OCI-LY7 (cell line): ENCODE measurements at regions of chr4 and their contacts with region 1.

Region 1: GRCh38 chr4:163554870-163555465 is 60.5 kb downstream of the TMA16 start:
- DNase-seq: peak; percentile 68
- H3K4me3 ChIP-seq: no peak overlapping the region
- H3K27ac ChIP-seq: no peak overlapping the region
- H3K4me1 ChIP-seq: peaks cover 40% of the 10 kb centered on the region
- CTCF ChIP-seq: peak; percentile 99

Region 2: DNA sequence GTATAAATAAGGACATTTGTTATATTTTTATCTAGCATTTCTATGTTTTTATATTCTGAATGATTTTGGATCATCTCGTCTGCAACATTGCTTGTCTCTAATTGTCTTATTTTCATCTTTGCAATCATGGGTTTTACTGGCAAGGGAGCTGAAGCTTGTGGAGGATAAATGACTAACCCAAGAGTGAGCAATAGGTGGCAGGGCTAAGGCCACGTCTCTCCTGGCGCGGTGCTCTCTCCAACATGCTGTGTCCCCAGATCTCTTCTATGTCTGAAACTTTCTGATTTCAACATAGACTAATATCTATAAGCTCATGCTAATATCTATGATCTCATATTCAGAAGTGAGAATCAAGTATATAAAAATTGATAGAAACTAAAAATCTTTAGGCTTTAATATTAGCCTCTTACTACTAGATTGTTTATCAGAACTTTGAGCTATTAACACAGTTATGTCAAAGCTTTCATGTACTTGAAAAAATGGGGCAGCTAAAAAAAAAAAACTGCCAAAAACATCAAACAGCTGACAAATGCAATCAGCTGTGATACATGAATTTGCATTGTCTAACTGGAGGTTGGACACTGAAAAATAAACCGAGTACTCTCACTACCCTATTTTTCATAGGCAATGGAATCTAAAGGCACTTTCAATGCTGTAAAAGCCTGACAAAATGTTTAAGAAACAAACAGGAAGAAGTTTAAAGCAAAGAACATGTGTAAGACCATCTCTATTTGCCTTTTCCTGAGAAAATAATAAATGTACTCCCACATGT is 108.7 kb after region 1 on chr4:
- CTCF ChIA-PET with region 1: interaction called, 13 read pairs
- POLR2A ChIA-PET with region 1: interaction called, 111 read pairs
- intact Hi-C with region 1: loop called (anchors 1 kb)
- DNase-seq: peak; percentile 93
- H3K4me3 ChIP-seq: peak overlapping the region; percentile 50
- H3K27ac ChIP-seq: peak overlapping the region; percentile 99
- H3K4me1 ChIP-seq: peaks cover 69% of the 10 kb centered on the region
- CTCF ChIP-seq: peak; percentile 52

Region 3: DNA sequence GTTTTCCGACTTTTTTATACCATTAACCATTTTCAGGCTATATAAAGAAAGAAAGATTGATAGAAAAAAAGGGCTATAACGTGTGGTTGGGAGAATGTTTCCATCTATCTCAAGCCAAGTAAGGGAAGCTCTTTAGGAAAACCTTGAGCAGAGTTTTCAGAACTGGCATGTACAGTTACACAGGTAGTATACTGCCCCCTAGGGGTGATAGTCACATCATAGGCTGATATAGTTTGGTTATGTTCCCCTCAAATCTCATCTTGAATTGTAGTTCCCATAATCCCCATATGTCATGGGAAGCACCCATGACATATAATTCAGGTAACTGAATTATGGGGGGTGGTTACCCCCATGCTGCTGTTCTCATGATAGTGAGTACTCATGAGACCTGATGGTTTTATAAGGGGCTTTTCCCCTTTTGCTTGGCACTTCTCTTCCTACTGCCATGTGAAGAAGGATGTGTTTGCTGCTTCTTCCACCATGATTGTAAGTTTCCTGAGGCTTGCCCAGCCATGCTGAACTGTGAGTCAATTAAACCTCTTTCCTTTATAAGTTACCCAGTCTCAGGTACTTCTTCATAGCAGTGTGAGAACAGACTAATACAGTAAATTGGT is 126.3 kb after region 1 on chr4:
- CTCF ChIA-PET with region 1: interaction called, 24 read pairs
- POLR2A ChIA-PET with region 1: interaction called, 109 read pairs
- intact Hi-C with region 1: loop called (anchors 1 kb)
- DNase-seq: peak; percentile 89
- H3K4me3 ChIP-seq: no peak overlapping the region
- H3K27ac ChIP-seq: no peak overlapping the region
- H3K4me1 ChIP-seq: peaks cover 4% of the 10 kb centered on the region
- CTCF ChIP-seq: peak; percentile 89

Region 4: DNA sequence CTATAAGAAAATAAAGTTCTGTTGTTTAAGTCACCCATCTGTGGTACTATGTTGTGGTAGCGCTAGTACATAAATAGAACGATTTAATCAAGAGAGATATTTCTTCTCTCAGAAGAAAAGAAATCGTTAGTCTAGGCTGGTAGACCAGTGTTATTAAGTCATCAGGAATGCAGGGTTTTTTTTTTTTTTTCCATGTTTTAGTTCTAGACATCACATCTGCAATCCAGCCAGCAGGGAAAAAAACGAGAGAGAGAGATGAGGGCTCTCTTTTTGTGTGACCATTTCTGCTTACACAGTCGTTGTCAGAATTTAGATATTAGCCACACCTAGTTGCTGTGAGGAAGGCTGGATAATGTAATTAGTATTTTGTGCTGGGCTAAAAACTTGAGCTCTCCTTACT is 356.9 kb after region 1 on chr4:
- CTCF ChIA-PET with region 1: no interaction called
- POLR2A ChIA-PET with region 1: no interaction called
- intact Hi-C with region 1: loop called (anchors 10 kb)
- DNase-seq: no peak
- H3K4me3 ChIP-seq: no peak overlapping the region
- H3K27ac ChIP-seq: no peak overlapping the region
- H3K4me1 ChIP-seq: no peaks in the 10 kb centered on the region
- CTCF ChIP-seq: no peak

Region 5: DNA sequence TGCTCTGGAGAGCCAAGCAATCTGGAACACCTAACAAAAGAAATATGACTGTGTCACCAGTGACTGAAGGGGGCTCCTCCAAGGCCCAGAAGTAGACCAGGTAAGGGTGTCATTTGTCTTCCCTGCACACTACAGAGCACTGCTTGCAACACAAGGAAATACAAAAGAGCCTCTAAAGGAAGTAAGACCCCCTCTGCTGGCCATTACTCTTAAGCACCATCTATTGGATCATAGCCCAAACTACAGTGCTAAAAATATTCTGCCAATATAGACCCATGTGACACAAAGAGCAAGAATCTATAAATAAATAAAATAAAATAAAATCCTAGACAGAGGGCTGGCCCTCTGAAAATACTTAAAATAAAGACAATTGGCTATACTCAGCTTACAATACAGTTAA is 468.2 kb after region 1 on chr4:
- CTCF ChIA-PET with region 1: no interaction called
- POLR2A ChIA-PET with region 1: no interaction called
- intact Hi-C with region 1: loop called (anchors 5 kb)
- DNase-seq: peak; percentile 19
- H3K4me3 ChIP-seq: no peak overlapping the region
- H3K27ac ChIP-seq: no peak overlapping the region
- H3K4me1 ChIP-seq: no peaks in the 10 kb centered on the region
- CTCF ChIP-seq: peak; percentile 61

Region 6: GRCh38 chr4:164748375-164748774 is 1193.4 kb after region 1 on chr4:
- CTCF ChIA-PET with region 1: no interaction called
- POLR2A ChIA-PET with region 1: no interaction called
- intact Hi-C with region 1: loop called (anchors 5 kb)
- DNase-seq: peak; percentile 37
- H3K4me3 ChIP-seq: no peak overlapping the region
- H3K27ac ChIP-seq: no peak overlapping the region
- H3K4me1 ChIP-seq: no peaks in the 10 kb centered on the region
- CTCF ChIP-seq: peak; percentile 80